Naive thymus-derived CD4-positive, alpha-beta T cell (primary cell): ENCODE measurements at regions of chr19 and their contacts with region 1.

Region 1: GRCh38 chr19:40013991-40014390 is 17.1 kb downstream of the ZNF546 start:
- DNase-seq: no peak
- ATAC-seq: no peak
- H3K4me3 ChIP-seq: no peak overlapping the region
- H3K4me3 Mint-ChIP-seq: no peak overlapping the region
- H3K27ac ChIP-seq: no peak overlapping the region
- H3K27ac Mint-ChIP-seq: no peak overlapping the region
- H3K4me1 ChIP-seq: no peaks in the 10 kb centered on the region
- H3K4me1 Mint-ChIP-seq: no peaks in the 10 kb centered on the region
- H3K27me3 ChIP-seq: no peaks in the 10 kb centered on the region
- H3K27me3 Mint-ChIP-seq: no peaks in the 10 kb centered on the region

Region 2: DNA sequence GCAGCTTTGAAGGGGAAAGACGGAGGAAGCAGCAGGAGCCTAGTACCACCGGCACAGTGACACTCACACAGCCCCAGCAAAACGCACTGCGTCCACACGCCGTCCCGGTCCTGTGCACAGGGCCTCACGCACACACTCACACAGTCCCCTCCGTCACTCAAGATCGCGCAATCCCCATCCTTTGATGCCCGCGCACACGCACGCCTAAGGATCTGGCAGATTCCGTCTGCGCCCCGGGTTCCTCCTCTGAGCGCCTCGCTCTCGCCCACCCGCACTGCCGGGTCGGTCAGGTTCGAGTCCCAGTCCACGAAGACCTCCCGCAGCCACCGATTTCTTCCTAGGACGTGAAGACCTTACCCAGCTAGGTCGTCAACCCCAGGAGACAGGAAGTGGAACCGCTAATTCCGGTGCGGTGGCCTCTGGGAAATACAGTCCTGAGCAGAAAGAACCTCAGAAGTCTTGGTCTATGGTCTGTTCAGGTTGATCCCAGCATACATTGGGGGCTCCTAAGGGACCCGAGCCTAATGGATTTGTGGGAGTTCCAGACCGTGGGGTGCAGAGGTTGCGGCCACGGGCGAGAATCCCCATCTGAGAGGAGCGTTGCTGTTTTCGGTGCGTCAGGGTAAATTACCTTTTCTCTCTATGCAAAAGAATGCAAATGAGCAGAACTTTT is 42.0 kb after region 1 on chr19 and contains the start of gene ZNF780B:
- CTCF ChIA-PET with region 1: no interaction called
- POLR2A ChIA-PET with region 1: no interaction called
- intact Hi-C with region 1: loop called in 1 of 2 experiments (anchors 5 kb)
- DNase-seq: peak; percentile 33 to 79 (median 76)
- ATAC-seq: peak; percentile 94
- H3K4me3 ChIP-seq: peak within 1 kb of the TSS; percentile 81
- H3K4me3 Mint-ChIP-seq: peak within 1 kb of the TSS; percentile 97 to 100 (median 99)
- H3K27ac ChIP-seq: peak within 1 kb of the TSS; percentile 89
- H3K27ac Mint-ChIP-seq: peak within 1 kb of the TSS; percentile 89 to 99 (median 96)
- H3K4me1 ChIP-seq: peaks cover 12% of the 10 kb centered on the region in 2 donors
- H3K4me1 Mint-ChIP-seq: peaks cover 31 to 62% (median 54%) of the 10 kb centered on the region in 7 donors
- H3K27me3 ChIP-seq: no peaks in the 10 kb centered on the region
- H3K27me3 Mint-ChIP-seq: peaks cover 0 to 14% (median 6%) of the 10 kb centered on the region in 5 donors
- total RNA-seq, gene ZNF780B: 22.7 to 85.2 (median 35.2) TPM